IMR-90 (cell line): ENCODE measurements at regions of chr3 and their contacts with region 1.

Region 1: DNA sequence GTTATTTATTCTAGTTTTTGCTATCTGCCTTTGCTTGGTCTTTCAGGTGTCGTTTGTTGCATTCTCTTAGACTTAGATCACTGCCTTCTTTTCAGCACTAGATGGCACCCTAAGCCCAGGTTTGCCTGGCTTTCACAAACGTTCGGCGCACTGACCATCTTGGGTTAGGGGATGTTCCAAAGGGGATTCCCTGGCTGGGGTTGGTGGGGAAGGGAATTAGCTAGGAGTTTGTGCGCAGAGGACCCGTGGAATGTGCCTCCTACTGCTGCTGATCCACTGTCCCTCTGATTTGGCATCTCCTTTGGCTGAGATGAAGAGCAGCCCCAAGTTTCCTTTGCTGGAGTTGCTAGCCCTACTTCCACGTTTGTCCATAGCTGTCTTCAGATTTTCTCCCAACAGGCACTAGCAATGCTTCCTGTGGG is 33.9 kb downstream of the PFN2 start:
- DNase-seq: peak; percentile 62
- ATAC-seq: peak; percentile 79
- H3K4me3 ChIP-seq: no peak overlapping the region
- H3K27ac ChIP-seq: no peak overlapping the region
- H3K4me1 ChIP-seq: no peaks in the 10 kb centered on the region
- H3K27me3 ChIP-seq: no peaks in the 10 kb centered on the region
- CTCF ChIP-seq: peak; percentile 80
- POLR2A ChIP-seq: peak; percentile 50; the same call in 1 of the 2 replicates
- RAD21 ChIP-seq: peak; percentile 89

Region 2: GRCh38 chr3:148044151-148044550 is 1892.7 kb before region 1 on chr3:
- CTCF ChIA-PET with region 1: no interaction called
- POLR2A ChIA-PET with region 1: no interaction called
- dilution Hi-C with region 1: no loop called
- in situ Hi-C with region 1: no loop called
- intact Hi-C with region 1: no loop called
- DNase-seq: no peak
- ATAC-seq: no peak
- H3K4me3 ChIP-seq: no peak overlapping the region
- H3K27ac ChIP-seq: no peak overlapping the region
- H3K4me1 ChIP-seq: no peaks in the 10 kb centered on the region
- H3K27me3 ChIP-seq: no peaks in the 10 kb centered on the region
- CTCF ChIP-seq: no peak
- POLR2A ChIP-seq: no peak
- RAD21 ChIP-seq: no peak

Region 3: DNA sequence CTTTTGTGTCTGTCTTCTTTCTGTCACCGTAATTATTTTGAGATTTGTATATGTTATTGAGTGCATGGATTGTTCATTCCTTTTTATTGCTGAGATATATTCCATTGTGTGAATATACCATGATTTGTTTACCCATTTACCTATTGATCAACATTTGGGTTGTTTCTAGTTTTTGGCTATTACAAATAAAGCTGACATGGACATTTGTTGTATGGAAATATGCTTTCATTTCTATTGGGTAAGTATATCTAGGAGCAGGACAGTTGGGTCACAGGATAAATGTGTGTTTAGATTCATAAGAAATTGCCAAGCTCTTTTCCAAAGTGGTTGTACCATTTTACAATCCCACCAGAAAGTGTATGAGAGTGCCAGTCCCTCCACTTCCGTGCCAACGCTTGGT is 17.3 kb before region 1 on chr3:
- CTCF ChIA-PET with region 1: no interaction called
- POLR2A ChIA-PET with region 1: no interaction called
- dilution Hi-C with region 1: no loop called
- in situ Hi-C with region 1: no loop called
- intact Hi-C with region 1: loop called (anchors 2 kb)
- DNase-seq: no peak
- ATAC-seq: no peak
- H3K4me3 ChIP-seq: no peak overlapping the region
- H3K27ac ChIP-seq: no peak overlapping the region
- H3K4me1 ChIP-seq: no peaks in the 10 kb centered on the region
- H3K27me3 ChIP-seq: no peaks in the 10 kb centered on the region
- CTCF ChIP-seq: no peak
- POLR2A ChIP-seq: no peak
- RAD21 ChIP-seq: no peak

Region 4: DNA sequence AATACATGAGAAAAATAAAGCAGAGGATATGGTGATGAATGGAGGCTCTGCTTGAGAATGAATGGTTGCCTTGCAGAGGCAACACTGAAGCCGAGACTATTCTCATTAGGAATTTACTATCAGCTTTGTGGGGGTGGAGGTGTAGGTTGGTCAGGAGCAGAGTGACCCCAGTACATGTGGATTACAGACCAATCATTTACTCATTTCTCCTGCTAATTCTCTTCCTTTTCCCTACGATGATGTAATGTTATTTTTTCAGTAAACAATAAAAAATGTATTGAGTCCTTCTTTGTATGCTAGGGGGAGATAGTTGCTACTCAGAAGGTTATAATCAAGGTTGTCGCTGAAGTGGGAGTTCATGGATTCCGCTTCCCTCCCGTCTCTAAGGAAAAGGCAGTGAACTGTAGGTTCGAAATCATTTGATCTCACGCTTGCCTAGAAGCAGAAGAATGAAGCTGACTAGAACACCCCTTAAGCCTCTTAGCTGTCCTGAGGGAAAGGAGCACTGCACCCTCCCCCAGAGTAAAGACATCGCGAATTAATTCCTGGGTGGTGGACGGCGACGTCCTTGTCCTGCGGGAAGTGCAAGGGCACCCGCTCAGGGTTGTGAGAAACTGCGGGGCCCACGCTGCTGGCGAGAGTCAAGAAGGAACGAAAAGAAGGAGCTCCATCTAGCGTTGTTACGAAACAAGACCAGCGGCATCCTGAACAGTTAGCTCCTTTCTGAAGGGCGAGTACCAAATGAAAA is 247.0 kb after region 1 on chr3:
- CTCF ChIA-PET with region 1: interaction called, 4 read pairs
- POLR2A ChIA-PET with region 1: no interaction called
- dilution Hi-C with region 1: no loop called
- in situ Hi-C with region 1: no loop called
- intact Hi-C with region 1: loop called (anchors 1 kb)
- DNase-seq: peak; percentile 83
- ATAC-seq: peak; percentile 97
- H3K4me3 ChIP-seq: peak overlapping the region; percentile 32
- H3K27ac ChIP-seq: peak overlapping the region; percentile 36; the same call in 1 of the 2 replicates
- H3K4me1 ChIP-seq: peaks cover 2% of the 10 kb centered on the region; the same call in 1 of the 2 replicates
- H3K27me3 ChIP-seq: no peaks in the 10 kb centered on the region
- CTCF ChIP-seq: peak; percentile 80
- POLR2A ChIP-seq: no peak
- RAD21 ChIP-seq: peak; percentile 91

Region 5: DNA sequence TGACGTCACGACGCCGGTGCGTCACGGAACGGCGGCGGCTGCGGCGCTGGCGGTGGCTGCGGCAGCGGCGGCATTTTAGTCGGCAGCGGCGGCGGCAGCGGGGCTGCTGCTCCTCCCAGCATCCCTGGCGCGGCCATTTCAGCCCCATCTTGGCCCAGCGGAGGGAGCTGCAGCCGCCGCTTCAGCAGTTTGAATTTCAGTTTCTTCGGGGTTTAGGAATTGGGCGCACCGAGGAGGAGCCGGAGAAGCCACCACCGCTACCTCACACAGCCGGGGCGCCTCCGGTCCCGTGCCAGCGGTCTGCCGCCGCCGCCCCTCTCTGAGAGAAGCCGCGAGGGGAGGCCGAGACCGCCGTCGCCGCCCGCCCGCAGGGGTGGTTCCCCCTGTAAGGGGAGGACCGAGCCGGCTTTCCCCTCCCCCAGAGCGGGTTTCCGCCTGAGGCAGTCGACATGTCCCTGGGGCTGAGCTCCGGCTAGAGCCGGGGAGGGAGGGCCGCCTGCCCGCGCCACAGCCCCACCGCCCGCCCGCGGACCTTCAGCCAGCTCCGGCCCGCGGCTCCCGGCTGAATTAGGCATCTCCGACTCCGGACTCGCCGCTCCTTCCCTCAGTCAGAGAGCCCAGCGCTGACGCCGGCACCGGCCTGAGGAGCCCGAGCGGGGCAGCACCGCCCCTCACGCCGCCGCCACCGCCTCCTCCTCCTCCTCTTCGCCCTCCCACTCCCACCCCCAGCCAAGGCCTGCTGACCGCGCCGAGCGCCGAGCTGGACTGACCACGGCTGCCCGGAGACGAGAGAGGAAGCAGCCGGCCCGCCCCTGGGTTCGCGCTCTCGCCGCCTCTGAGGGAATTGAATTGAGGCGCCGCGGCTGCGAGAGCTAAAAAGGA is 471.6 kb after region 1 on chr3 and contains the start of gene TSC22D2:
- CTCF ChIA-PET with region 1: no interaction called
- POLR2A ChIA-PET with region 1: no interaction called
- dilution Hi-C with region 1: no loop called
- in situ Hi-C with region 1: no loop called
- intact Hi-C with region 1: loop called (anchors 2 kb)
- DNase-seq: peak; percentile 92
- ATAC-seq: peak; percentile 81
- H3K4me3 ChIP-seq: peak within 1 kb of the TSS; percentile 76
- H3K27ac ChIP-seq: peak within 1 kb of the TSS; percentile 97
- H3K4me1 ChIP-seq: no peaks in the 10 kb centered on the region
- H3K27me3 ChIP-seq: no peaks in the 10 kb centered on the region
- CTCF ChIP-seq: peak; percentile 31
- POLR2A ChIP-seq: peak; percentile 94
- RAD21 ChIP-seq: no peak; the same call in 1 of the 2 replicates
- total RNA-seq, gene TSC22D2: 12.2 and 15.8 TPM in 2 replicates

Region 6: DNA sequence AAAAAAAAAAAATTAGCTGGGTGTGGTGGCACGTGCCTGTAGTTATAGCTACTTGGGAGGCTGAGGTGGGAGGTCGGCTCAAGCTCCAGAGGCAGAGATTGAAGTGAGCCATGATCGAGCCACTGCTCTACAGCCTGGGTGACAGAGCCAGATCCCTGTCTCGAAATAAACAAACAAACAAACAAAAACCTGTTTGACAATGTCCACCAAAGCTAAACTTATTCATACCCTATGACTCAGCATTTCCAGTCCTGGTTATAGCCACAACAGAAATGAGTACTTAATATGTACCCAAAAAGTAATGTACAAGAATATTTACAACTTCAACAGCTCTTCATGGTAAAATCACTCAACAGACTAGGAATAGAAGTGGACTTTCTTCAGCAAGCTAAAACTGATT is 578.4 kb after region 1 on chr3:
- CTCF ChIA-PET with region 1: no interaction called
- POLR2A ChIA-PET with region 1: no interaction called
- dilution Hi-C with region 1: no loop called
- in situ Hi-C with region 1: no loop called
- intact Hi-C with region 1: loop called (anchors 10 kb)
- DNase-seq: no peak
- ATAC-seq: no peak
- H3K4me3 ChIP-seq: no peak overlapping the region
- H3K27ac ChIP-seq: no peak overlapping the region
- H3K4me1 ChIP-seq: no peaks in the 10 kb centered on the region
- H3K27me3 ChIP-seq: no peaks in the 10 kb centered on the region
- CTCF ChIP-seq: no peak
- POLR2A ChIP-seq: no peak
- RAD21 ChIP-seq: no peak